Activated CD8-positive, alpha-beta T cell treated with anti-CD3 and anti-CD28 coated beads, Interleukin-2, amount 10 ng/mL, durations not matched to agents 7 days and 5 days (primary cell): ENCODE measurements at regions of chr11 and their contacts with region 1.

Region 1: GRCh38 chr11:111512296-111513239 is at the start of gene BTG4:
- DNase-seq: peak; percentile 46
- ATAC-seq: peak; percentile 78
- H3K4me3 Mint-ChIP-seq: peak within 1 kb of the TSS; percentile 69
- H3K27ac Mint-ChIP-seq: peak within 1 kb of the TSS; percentile 69
- H3K4me1 Mint-ChIP-seq: peaks cover 22% of the 10 kb centered on the region
- H3K27me3 Mint-ChIP-seq: peaks cover 24% of the 10 kb centered on the region
- total RNA-seq, gene BTG4: not detected

Region 2: DNA sequence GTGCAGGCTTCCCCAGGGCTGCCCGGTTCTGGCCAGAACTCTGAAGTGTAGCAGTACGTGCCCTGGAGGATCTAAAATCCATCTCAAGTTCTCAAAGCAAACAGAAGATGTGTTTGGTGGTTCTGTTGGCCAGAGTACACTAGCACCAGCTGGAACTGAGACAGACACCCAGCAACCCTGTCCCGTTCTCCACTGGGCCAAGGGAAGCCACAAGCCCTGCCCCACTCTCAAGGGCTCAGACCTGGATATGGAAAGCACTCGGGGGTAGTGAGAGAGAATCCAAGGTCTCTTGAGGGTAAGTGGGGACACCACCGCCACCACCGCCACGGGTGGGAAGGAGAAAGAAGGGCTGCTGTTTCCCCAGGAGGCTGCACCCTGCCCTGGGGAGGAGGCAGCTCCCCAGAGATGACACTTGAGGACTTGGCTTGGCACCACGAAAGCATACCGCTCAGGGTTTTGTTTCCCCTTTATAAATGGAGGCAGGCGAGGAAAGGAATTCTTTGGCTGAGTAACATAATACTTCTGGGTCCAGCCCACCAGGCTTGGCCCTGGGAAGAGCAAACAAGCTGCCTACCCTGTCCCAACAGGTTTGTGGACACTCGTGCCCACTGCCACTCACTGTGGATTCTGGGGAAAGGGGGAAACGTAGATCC is 77.4 kb before region 1 on chr11:
- CTCF ChIA-PET with region 1: no interaction called
- POLR2A ChIA-PET with region 1: no interaction called
- DNase-seq: no peak
- ATAC-seq: no peak
- H3K4me3 Mint-ChIP-seq: no peak overlapping the region
- H3K27ac Mint-ChIP-seq: no peak overlapping the region
- H3K4me1 Mint-ChIP-seq: peaks cover 15% of the 10 kb centered on the region
- H3K27me3 Mint-ChIP-seq: peaks cover 10% of the 10 kb centered on the region

Region 3: DNA sequence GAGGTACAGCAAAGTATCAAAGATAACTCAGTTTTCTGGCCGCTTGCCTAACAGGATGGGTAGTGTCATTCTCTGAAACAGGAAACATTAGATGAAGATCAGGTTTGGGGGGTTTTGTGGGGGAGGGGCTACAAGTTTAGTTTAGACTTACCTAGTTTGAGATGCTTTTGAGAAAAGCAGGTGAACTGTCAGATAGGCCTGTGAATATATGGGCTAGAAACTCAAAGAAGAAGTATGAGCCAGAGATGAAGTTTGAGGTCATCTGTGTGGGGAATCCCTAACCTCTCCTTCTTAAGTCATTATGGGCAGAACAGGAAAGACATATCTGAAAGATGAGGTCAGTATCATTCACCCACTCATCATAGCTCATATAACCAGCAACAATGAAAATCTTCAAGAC is 13.9 kb after region 1 on chr11:
- CTCF ChIA-PET with region 1: interaction called, 36 read pairs
- POLR2A ChIA-PET with region 1: interaction called, 15 read pairs
- DNase-seq: peak; percentile 37
- ATAC-seq: peak; percentile 56
- H3K4me3 Mint-ChIP-seq: no peak overlapping the region
- H3K27ac Mint-ChIP-seq: peak overlapping the region; percentile 41
- H3K4me1 Mint-ChIP-seq: peaks cover 53% of the 10 kb centered on the region
- H3K27me3 Mint-ChIP-seq: no peaks in the 10 kb centered on the region

Region 4: GRCh38 chr11:111531687-111532364 is 19.3 kb after region 1 on chr11:
- CTCF ChIA-PET with region 1: interaction called, 36 read pairs
- POLR2A ChIA-PET with region 1: interaction called, 15 read pairs
- DNase-seq: peak; percentile 77
- ATAC-seq: peak; percentile 99
- H3K4me3 Mint-ChIP-seq: peak overlapping the region; percentile 35
- H3K27ac Mint-ChIP-seq: peak overlapping the region; percentile 92
- H3K4me1 Mint-ChIP-seq: peaks cover 42% of the 10 kb centered on the region
- H3K27me3 Mint-ChIP-seq: peaks cover 3% of the 10 kb centered on the region

Region 5: GRCh38 chr11:111540114-111540936 is 27.8 kb after region 1 on chr11 and contains the start of gene LAYN:
- CTCF ChIA-PET with region 1: interaction called, 38 read pairs
- POLR2A ChIA-PET with region 1: interaction called, 79 read pairs
- DNase-seq: peak; percentile 77
- ATAC-seq: peak; percentile 66
- H3K4me3 Mint-ChIP-seq: peak within 1 kb of the TSS; percentile 73
- H3K27ac Mint-ChIP-seq: peak within 1 kb of the TSS; percentile 94
- H3K4me1 Mint-ChIP-seq: peaks cover 64% of the 10 kb centered on the region
- H3K27me3 Mint-ChIP-seq: peaks cover 10% of the 10 kb centered on the region
- total RNA-seq, gene LAYN: 11.1 to 12.8 TPM

Region 6: GRCh38 chr11:111557425-111558111 is 45.0 kb after region 1 on chr11:
- CTCF ChIA-PET with region 1: no interaction called
- POLR2A ChIA-PET with region 1: no interaction called
- DNase-seq: no peak
- ATAC-seq: no peak
- H3K4me3 Mint-ChIP-seq: no peak overlapping the region
- H3K27ac Mint-ChIP-seq: no peak overlapping the region
- H3K4me1 Mint-ChIP-seq: no peaks in the 10 kb centered on the region
- H3K27me3 Mint-ChIP-seq: no peaks in the 10 kb centered on the region

Region 7: DNA sequence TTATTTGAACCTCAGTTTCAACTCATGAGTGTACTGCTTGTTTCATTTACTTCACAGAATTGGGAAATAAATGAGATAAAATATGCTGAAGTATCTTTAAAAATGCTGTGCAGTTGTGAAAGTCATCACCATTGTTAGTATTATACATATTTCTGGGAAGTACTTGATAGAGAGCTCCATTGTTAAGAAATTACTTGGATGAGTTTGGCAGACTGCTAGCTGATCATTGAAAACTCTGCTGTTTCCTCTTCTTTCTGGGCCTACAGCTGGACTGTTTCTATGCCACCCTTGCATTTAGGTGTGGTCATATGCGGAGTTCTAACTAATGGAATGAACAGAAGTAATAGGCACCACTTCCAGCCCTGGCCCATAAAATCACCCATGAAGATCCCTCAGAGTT is 99.7 kb after region 1 on chr11:
- CTCF ChIA-PET with region 1: no interaction called
- POLR2A ChIA-PET with region 1: no interaction called
- DNase-seq: no peak
- ATAC-seq: no peak
- H3K4me3 Mint-ChIP-seq: no peak overlapping the region
- H3K27ac Mint-ChIP-seq: no peak overlapping the region
- H3K4me1 Mint-ChIP-seq: no peaks in the 10 kb centered on the region
- H3K27me3 Mint-ChIP-seq: no peaks in the 10 kb centered on the region